ENCODE measurements at regions of chr3 and their contacts with region 1.

Region 1: GRCh38 chr3:129934234-129935123 is 40.0 kb upstream of the TRH start:
- H3K4me3 Mint-ChIP-seq: peak overlapping the region; percentile 50
- H3K27ac Mint-ChIP-seq: no peak overlapping the region
- H3K4me1 Mint-ChIP-seq: peaks cover 10% of the 10 kb centered on the region
- H3K27me3 Mint-ChIP-seq: peaks cover 5% of the 10 kb centered on the region

Region 2: DNA sequence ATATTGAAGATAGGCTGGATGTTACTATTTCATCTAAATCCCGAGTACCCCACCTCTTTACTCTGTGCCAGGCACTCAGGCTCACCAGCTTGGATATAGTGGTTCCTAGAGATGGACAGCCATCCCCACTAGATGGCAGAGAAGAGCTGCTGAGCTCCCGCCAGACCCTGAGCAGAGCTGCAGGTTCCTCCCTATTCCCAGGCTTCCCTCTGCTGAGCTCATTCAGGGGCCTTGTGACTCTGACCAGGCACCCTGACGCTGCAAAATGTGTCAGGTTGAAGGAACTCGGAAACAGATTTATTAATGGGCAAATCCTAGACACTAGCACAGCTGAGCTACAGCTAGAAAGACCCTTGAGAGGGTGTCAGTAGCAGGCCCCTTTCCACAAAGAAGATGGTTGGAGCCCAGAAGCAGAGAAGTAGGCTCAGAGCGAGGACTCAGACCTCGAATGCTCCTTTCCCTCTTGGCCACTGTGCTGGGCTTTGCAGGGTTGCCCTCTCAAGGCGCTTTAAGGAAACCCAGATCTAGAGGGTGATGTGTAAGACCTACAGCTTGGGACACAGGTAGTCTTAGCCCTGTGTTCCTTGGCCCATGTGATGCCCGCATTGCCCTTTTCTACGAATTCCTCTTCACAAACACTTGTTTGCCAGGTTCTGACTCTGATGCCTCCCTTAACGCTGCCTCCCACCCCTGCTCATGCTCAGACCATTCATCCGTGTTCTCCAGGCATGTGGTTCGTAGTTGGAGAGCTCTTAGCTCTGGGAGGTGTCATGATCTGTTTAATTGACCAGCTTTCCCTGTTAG is 444.0 kb before region 1 on chr3:
- intact Hi-C with region 1: loop called (anchors 2 kb)
- H3K4me3 Mint-ChIP-seq: no peak overlapping the region
- H3K27ac Mint-ChIP-seq: peak overlapping the region; percentile 55
- H3K4me1 Mint-ChIP-seq: peaks cover 44% of the 10 kb centered on the region
- H3K27me3 Mint-ChIP-seq: no peaks in the 10 kb centered on the region

Region 3: GRCh38 chr3:129627429-129628168 is 306.9 kb before region 1 on chr3:
- intact Hi-C with region 1: loop called (anchors 5 kb)
- H3K4me3 Mint-ChIP-seq: peak overlapping the region; percentile 81
- H3K27ac Mint-ChIP-seq: peak overlapping the region; percentile 95
- H3K4me1 Mint-ChIP-seq: peaks cover 53% of the 10 kb centered on the region
- H3K27me3 Mint-ChIP-seq: no peaks in the 10 kb centered on the region

Region 4: DNA sequence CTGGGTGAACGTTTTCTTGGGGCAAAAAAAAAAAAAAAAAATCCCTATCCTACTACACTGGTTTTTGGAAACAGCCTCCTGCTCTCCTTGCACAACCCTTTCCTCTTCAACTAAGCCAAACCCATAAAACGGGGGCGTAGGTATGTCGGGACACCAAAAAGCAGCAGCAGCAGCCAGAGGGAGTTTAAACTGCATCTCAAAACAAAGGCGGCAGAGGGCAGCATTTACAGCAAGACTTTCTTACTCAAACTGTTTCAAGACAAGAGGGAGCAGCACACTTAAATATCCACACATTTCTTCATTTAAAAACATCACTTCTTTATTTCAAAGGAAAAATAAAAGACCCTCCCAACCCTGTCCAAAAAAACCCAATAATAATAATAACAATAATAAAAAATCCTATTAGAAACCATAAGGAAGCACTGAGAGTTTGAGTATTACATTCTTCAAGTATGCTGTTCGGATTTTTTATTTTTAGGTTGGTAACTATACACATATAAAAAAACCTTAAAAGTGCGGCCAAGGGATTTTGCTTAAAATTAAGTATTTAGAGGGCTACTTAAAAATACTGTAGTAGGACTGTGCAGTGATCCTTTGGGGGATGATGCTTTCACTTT is 284.1 kb before region 1 on chr3:
- intact Hi-C with region 1: loop called (anchors 1 kb)
- H3K4me3 Mint-ChIP-seq: no peak overlapping the region
- H3K27ac Mint-ChIP-seq: no peak overlapping the region
- H3K4me1 Mint-ChIP-seq: peaks cover 8% of the 10 kb centered on the region
- H3K27me3 Mint-ChIP-seq: no peaks in the 10 kb centered on the region

Region 5: GRCh38 chr3:129893581-129894070 is 40.9 kb before region 1 on chr3 and contains the start of gene TMCC1:
- intact Hi-C with region 1: loop called (anchors 5 kb)
- H3K4me3 Mint-ChIP-seq: peak within 1 kb of the TSS; percentile 83
- H3K27ac Mint-ChIP-seq: peak within 1 kb of the TSS; percentile 87
- H3K4me1 Mint-ChIP-seq: peaks cover 47% of the 10 kb centered on the region
- H3K27me3 Mint-ChIP-seq: no peaks in the 10 kb centered on the region

Region 6: DNA sequence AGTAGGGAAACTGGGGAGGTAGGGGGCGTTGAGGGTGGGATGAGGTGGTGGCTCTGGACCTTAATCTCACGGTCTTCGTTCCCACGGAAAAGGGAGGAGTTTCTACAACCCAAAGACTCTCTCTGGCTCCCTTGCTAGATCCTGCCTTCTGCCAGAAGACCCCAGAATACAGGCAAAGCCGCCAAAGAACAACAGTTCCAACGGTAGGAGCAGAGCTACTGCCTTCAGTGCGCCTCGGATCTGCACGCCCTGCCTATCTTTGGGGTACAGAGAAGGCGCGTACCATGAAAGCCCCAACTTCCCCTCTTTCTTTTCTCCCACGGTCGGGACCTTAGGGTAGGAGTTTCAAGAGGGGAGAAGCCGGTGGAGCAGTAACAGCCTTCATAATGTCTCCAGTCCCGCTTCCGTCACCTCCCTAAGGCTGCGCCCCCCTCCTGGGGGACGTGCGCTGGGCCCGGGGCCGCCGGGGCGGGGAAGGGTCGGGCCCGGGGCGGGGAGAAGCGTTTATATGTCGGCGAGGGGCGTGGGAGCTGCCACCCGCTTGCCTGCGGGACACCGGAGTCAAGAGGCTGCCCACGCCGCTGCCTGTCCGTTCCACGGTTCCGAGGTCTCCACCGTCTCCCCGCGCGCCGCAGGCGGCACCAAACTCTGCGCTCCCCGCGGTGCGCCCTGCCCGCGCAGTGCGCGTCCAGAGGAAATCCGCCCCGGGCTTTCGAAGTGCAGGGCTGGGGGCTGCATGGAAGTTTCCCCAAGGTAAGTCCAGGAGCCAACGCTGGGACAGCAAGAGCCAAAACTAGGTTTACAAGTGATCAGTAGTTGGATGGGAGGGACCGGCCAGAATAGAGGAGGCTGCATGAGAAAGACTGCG is 582.4 kb after region 1 on chr3 and contains the start of gene COL6A6:
- intact Hi-C with region 1: no loop called
- H3K4me3 Mint-ChIP-seq: no peak within 1 kb of the TSS
- H3K27ac Mint-ChIP-seq: no peak within 1 kb of the TSS
- H3K4me1 Mint-ChIP-seq: no peaks in the 10 kb centered on the region
- H3K27me3 Mint-ChIP-seq: peaks cover 35% of the 10 kb centered on the region

Measured in dendritic cell treated with granulocyte-macrophage colony-stimulating factor and Interleukin-4, amounts not matched to agents 40 ng/mL and 50 ng/mL, for 4 days (primary cell).